Ovary (tissue), 10 donors: ENCODE measurements at regions of chr1 and their contacts with region 1.

Region 1: DNA sequence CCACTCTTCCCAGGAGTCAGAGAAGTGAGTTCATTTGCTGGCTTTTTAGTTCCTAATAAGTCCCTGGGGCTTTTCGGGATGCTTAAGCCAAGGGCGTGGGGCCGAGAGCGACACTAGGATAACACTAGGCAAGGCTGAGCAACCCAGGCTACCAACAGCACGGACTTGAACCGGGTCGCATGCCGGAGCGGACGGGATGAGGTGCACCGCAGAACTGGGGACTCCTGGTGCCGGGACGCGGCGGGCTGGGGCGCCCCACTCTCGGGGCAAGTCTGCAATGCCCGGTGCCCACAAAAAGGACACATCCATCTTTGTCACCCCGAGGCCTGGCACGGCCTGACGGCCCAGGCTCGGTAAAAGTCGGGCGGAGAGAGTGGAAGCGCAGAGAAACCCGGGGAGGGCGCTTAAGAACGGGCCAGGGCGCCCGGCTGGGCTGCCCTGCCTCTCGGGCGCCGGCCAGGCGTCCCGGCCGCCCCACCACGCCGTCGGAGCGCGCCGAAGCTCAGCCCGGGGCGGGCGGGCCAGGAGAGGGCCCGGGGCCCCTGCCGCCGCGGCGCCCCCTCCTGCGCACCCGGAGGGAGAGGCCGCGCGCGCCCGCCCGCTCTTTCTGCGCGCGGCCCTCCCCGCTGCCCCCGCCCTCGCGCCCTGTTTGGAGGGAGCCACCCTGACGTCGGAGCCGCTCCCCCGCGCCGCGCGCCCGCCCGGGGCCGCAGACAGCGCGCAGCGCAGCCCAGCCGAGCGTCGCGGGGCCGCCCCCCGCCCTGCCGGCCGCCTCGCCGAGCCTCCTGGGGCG is at the start of gene NBL1:
- DNase-seq: peak; percentile 86 to 94 (median 88)
- H3K4me3 ChIP-seq: peak within 1 kb of the TSS; percentile 65
- H3K27ac ChIP-seq: peak within 1 kb of the TSS; percentile 96 to 98
- H3K4me1 ChIP-seq: peaks cover 23% of the 10 kb centered on the region
- H3K27me3 ChIP-seq: no peaks in the 10 kb centered on the region
- CTCF ChIP-seq: no peak
- EP300 ChIP-seq: no peak
- POLR2A ChIP-seq: peak; percentile 51
- total RNA-seq, gene NBL1: 217 to 852 (median 530) TPM

Region 2: GRCh38 chr1:18452375-18452949 is 1191.3 kb before region 1 on chr1:
- intact Hi-C with region 1: no loop called
- DNase-seq: no peak
- H3K4me3 ChIP-seq: no peak overlapping the region
- H3K27ac ChIP-seq: no peak overlapping the region
- H3K4me1 ChIP-seq: no peaks in the 10 kb centered on the region
- H3K27me3 ChIP-seq: no peaks in the 10 kb centered on the region
- CTCF ChIP-seq: no peak
- EP300 ChIP-seq: no peak
- POLR2A ChIP-seq: no peak

Region 3: GRCh38 chr1:19398309-19398760 is 245.5 kb before region 1 on chr1:
- intact Hi-C with region 1: loop called in 1 of 4 experiments (anchors 5 kb)
- DNase-seq: peak; percentile 68 to 79 (median 77)
- H3K4me3 ChIP-seq: no peak overlapping the region
- H3K27ac ChIP-seq: peak overlapping the region; percentile 8 to 77
- H3K4me1 ChIP-seq: peaks cover 55% of the 10 kb centered on the region
- H3K27me3 ChIP-seq: no peaks in the 10 kb centered on the region
- CTCF ChIP-seq: peak in 2 of 3 donors; percentile 59 to 71
- EP300 ChIP-seq: no peak
- POLR2A ChIP-seq: no peak

Region 4: DNA sequence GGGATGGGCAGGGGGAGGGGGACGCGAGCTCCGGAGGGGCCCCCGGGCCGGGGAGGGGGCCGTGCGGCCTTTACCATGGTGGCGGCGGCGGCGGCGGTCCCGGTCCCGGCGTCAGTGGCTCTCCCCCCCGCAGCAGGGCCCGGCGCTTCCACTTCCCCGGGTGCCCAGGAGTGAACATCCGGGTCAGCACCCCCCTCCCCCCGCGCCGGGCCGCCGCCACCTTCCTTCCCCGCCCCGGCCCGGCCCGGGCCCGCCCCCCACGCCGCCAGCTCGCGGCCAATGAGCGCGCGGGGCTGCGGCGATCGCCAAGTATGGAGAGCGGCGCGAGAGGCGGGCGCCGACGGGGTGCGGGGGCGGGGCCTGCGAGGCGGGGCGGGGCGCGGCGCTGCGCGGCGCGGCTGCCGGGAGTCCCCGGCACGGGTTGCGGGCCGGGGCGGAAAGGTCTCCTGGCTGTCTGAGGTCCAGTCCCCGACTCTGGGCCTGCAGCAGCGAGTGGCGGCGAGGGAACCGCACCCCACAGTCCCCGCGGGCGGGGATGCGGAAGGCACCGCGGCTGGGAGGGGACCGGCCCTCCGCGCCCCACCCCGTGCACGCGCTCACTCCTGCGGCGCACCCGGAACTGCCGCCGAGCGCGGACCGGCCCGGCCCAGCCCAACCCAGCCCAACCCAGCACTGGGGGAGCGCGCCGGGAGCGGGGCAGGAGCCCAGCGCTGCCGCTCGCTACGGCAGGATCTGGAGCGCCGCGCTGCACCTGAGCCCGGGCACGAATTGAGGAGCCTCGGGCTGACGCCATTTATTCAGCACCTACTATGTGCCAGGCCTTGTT is 158.2 kb before region 1 on chr1 and contains the start of gene CAPZB:
- intact Hi-C with region 1: loop called in 2 of 4 experiments (anchors 5 to 10 kb)
- DNase-seq: peak; percentile 95 to 97 (median 96)
- H3K4me3 ChIP-seq: peak within 1 kb of the TSS; percentile 98
- H3K27ac ChIP-seq: peak within 1 kb of the TSS; percentile 92 to 94
- H3K4me1 ChIP-seq: peaks cover 29% of the 10 kb centered on the region
- H3K27me3 ChIP-seq: no peaks in the 10 kb centered on the region
- CTCF ChIP-seq: no peak
- EP300 ChIP-seq: no peak
- POLR2A ChIP-seq: peak; percentile 86
- total RNA-seq, gene CAPZB: 85.0 to 347 (median 258) TPM

Region 5: GRCh38 chr1:19504796-19505692 is 138.8 kb before region 1 on chr1:
- intact Hi-C with region 1: loop called in 2 of 4 experiments (anchors 5 kb)
- DNase-seq: peak in 4 of 5 donors; percentile 58 to 83 (median 68)
- H3K4me3 ChIP-seq: no peak overlapping the region
- H3K27ac ChIP-seq: peak overlapping the region in 1 of 2 donors; percentile 83
- H3K4me1 ChIP-seq: peaks cover 9% of the 10 kb centered on the region
- H3K27me3 ChIP-seq: no peaks in the 10 kb centered on the region
- CTCF ChIP-seq: no peak
- EP300 ChIP-seq: peak; percentile 76
- POLR2A ChIP-seq: no peak

Region 6: DNA sequence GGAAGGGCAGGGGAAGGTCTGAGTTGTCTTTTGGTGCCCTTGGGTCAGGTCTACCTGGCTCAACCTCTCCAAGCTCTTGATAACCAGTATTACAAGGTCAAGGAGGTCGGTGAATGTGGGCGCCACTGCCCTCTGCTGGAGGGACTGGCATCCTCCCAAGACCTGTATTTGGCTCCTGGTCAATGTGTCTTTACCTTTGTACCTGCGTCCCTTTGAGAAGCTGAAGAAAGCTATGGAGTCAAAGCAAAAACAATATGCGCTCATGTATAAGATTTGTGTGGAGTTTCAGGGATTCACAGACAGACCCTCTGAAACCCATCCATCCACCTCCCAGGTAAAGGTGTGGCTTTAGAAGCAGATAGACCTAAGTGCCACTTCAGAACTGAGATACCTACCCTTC is 61.5 kb before region 1 on chr1:
- intact Hi-C with region 1: no loop called
- DNase-seq: peak in 1 of 5 donors; percentile 31
- H3K4me3 ChIP-seq: no peak overlapping the region
- H3K27ac ChIP-seq: no peak overlapping the region
- H3K4me1 ChIP-seq: no peaks in the 10 kb centered on the region
- H3K27me3 ChIP-seq: no peaks in the 10 kb centered on the region
- CTCF ChIP-seq: no peak
- EP300 ChIP-seq: no peak
- POLR2A ChIP-seq: no peak

Region 7: GRCh38 chr1:19596714-19597495 is 46.9 kb before region 1 on chr1:
- intact Hi-C with region 1: loop called in 1 of 4 experiments (anchors 5 kb)
- DNase-seq: peak; percentile 97 to 98 (median 98)
- H3K4me3 ChIP-seq: peak overlapping the region; percentile 99
- H3K27ac ChIP-seq: peak overlapping the region; percentile 73 to 91
- H3K4me1 ChIP-seq: peaks cover 6% of the 10 kb centered on the region
- H3K27me3 ChIP-seq: no peaks in the 10 kb centered on the region
- CTCF ChIP-seq: no peak
- EP300 ChIP-seq: no peak
- POLR2A ChIP-seq: peak; percentile 71